Heart left ventricle (tissue), 16 donors: ENCODE measurements at regions of chr1 and their contacts with region 1.

Region 1: GRCh38 chr1:113140588-113141446 is 67.8 kb downstream of the LRIG2 start:
- DNase-seq: peak in 4 of 5 donors; percentile 41 to 65 (median 56)
- ATAC-seq: peak; percentile 76 to 92 (median 90)
- H3K4me3 ChIP-seq: peak overlapping the region in 5 of 12 donors; percentile 11 to 42 (median 20)
- H3K27ac ChIP-seq: peak overlapping the region in 5 of 12 donors; percentile 2 to 61 (median 48)
- H3K4me1 ChIP-seq: peaks cover 0 to 33% (median 25%) of the 10 kb centered on the region in 12 donors
- H3K27me3 ChIP-seq: no peaks in the 10 kb centered on the region
- CTCF ChIP-seq: peak; percentile 65 to 91 (median 82)
- POLR2A ChIP-seq: no peak

Region 2: GRCh38 chr1:113191579-113192076 is 50.8 kb after region 1 on chr1:
- intact Hi-C with region 1: no loop called
- DNase-seq: no peak
- ATAC-seq: peak in 3 of 4 donors; percentile 27 to 78 (median 34)
- H3K4me3 ChIP-seq: no peak overlapping the region
- H3K27ac ChIP-seq: no peak overlapping the region
- H3K4me1 ChIP-seq: peaks cover 0 to 4% (median 0%) of the 10 kb centered on the region in 12 donors
- H3K27me3 ChIP-seq: no peaks in the 10 kb centered on the region
- CTCF ChIP-seq: no peak
- POLR2A ChIP-seq: no peak

Region 3: DNA sequence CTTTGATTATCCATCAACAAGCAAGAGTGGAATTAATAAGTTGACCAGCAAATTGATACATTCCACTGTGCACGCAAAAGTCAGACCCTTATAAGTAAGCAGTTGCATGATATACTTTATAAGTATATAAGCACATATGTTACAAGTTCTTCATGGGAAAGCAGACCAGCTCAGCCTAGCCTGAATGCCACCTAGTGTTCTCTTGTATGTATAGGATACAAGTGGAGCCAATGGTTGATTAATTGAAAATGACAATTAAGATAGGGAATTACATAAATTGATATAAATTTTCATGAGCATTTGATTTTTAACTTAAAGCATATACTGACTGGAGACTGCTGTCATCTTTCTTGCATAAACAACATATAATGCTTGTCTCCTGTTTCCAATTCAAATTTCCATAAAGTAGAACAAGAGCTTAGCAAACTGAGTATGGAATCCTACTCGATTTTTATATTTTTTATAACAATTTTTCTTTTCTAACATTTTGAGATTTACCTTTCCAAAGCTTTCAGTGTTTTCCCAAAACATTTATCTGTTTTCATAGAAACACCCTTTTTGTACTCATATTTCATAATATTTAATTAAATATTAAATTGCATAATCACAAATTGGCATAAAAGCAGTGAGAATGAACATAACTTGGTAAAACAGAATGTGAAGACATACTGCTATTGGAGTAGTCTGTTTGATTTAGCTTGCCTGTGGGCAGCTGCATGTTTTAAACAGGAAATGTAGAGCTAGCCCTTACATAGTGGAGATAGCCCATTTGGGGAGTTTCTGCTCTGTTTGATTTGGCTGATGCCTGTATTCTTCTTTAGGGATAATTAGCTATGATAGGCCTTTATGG is 312.3 kb after region 1 on chr1:
- intact Hi-C with region 1: loop called in 6 of 10 experiments (anchors 2 to 10 kb)
- DNase-seq: no peak
- ATAC-seq: peak in 2 of 4 donors; percentile 22 to 68
- H3K4me3 ChIP-seq: no peak overlapping the region
- H3K27ac ChIP-seq: no peak overlapping the region
- H3K4me1 ChIP-seq: peaks cover 0 to 17% (median 5%) of the 10 kb centered on the region in 12 donors
- H3K27me3 ChIP-seq: no peaks in the 10 kb centered on the region
- CTCF ChIP-seq: peak in 11 of 12 donors; percentile 4 to 51 (median 30)
- POLR2A ChIP-seq: no peak

Region 4: DNA sequence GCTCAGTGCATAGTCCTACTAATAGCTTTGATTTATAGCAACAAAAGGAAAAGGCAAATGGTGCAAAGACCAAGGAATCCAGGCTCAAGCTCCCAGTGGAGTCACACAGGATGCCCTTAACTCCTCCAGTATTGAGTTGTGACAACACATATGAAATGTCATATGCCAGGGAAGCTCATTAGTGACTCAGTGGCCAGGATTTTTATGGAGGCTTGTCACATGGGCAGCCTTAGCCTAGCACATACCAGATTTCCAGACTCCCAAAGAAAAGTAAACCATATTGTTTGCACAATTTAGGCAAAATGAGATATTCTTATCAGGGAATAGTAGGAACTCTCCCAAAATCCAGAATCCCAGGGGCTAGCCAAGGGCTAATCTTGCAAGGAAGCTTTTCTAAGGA is 378.7 kb after region 1 on chr1:
- intact Hi-C with region 1: no loop called
- DNase-seq: no peak
- ATAC-seq: no peak
- H3K4me3 ChIP-seq: no peak overlapping the region
- H3K27ac ChIP-seq: no peak overlapping the region
- H3K4me1 ChIP-seq: peaks cover 0 to 5% (median 0%) of the 10 kb centered on the region in 12 donors
- H3K27me3 ChIP-seq: no peaks in the 10 kb centered on the region
- CTCF ChIP-seq: no peak
- POLR2A ChIP-seq: no peak

Region 5: GRCh38 chr1:113677250-113678158 is 536.7 kb after region 1 on chr1:
- intact Hi-C with region 1: loop called (anchors 1 to 5 kb)
- DNase-seq: peak in 3 of 5 donors; percentile 16 to 39 (median 22)
- ATAC-seq: peak in 3 of 4 donors; percentile 42 to 75 (median 74)
- H3K4me3 ChIP-seq: no peak overlapping the region
- H3K27ac ChIP-seq: no peak overlapping the region
- H3K4me1 ChIP-seq: peaks cover 0 to 11% (median 7%) of the 10 kb centered on the region in 12 donors
- H3K27me3 ChIP-seq: no peaks in the 10 kb centered on the region
- CTCF ChIP-seq: peak; percentile 46 to 73 (median 64)
- POLR2A ChIP-seq: no peak